SK-N-SH (cell line): ENCODE measurements at regions of chr5 and their contacts with region 1.

Region 1: DNA sequence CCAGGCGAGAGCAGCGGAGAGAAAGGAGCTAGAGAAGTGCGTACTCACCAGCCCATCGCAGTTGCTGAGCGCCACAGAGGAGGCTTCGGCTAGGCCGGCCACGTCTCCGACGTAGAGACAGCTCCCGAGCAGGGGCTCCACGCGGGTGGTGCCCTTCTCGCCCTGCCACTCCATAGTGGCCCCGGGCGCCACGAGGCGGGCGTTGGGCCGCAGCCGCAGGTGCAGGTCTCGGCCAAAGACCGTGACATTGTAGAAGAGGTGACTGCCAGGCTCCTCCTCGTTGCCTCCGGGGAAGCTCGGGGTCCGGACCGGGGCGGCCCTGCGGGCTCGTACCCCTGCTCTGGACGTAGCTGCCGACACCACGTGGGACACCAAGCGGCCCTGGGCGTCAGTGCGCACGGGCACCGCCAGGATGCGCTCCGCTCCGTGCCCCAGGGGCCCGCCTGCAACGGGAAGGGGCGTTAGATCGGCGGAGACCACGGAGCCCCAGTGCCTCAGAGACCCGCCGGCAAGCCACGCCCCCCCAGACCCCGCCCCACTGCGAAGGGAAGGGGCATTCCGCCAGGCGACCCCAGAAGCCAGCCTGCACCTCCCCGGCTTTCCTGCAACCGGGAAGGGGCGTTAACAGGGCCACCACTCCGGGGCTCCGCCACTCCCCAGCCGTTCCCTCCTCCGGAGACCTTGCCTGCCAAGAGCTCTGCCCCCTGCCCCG is 1.4 kb downstream of the ADAMTS2 start:
- DNase-seq: peak; percentile 85
- H3K4me3 ChIP-seq: peak overlapping the region in 1 of 2 experiments; percentile 58; a peak in 2 of 4 replicates
- H3K27ac ChIP-seq: peak overlapping the region in 1 of 2 experiments; percentile 90; a peak in 2 of 4 replicates
- H3K4me1 ChIP-seq: peaks cover 0 to 51% of the 10 kb centered on the region in 2 experiments; a peak in 1 of 4 replicates
- H3K27me3 ChIP-seq: no peaks in the 10 kb centered on the region
- CTCF ChIP-seq: no peak
- EP300 ChIP-seq: no peak
- RAD21 ChIP-seq: peak; percentile 46

Region 2: GRCh38 chr5:179154991-179155955 is 188.6 kb before region 1 on chr5:
- CTCF ChIA-PET with region 1: no interaction called
- POLR2A ChIA-PET with region 1: no interaction called
- DNase-seq: peak; percentile 64
- H3K4me3 ChIP-seq: no peak overlapping the region
- H3K27ac ChIP-seq: no peak overlapping the region
- H3K4me1 ChIP-seq: peaks cover 0 to 8% of the 10 kb centered on the region in 2 experiments; a peak in 1 of 4 replicates
- H3K27me3 ChIP-seq: no peaks in the 10 kb centered on the region
- CTCF ChIP-seq: no peak
- EP300 ChIP-seq: no peak
- RAD21 ChIP-seq: no peak

Region 3: GRCh38 chr5:179228341-179229121 is 115.3 kb before region 1 on chr5:
- CTCF ChIA-PET with region 1: no interaction called
- POLR2A ChIA-PET with region 1: no interaction called
- DNase-seq: peak; percentile 25
- H3K4me3 ChIP-seq: no peak overlapping the region
- H3K27ac ChIP-seq: no peak overlapping the region; a peak in 1 of 4 replicates
- H3K4me1 ChIP-seq: peaks cover 0 to 42% of the 10 kb centered on the region in 2 experiments; a peak in 1 of 4 replicates
- H3K27me3 ChIP-seq: no peaks in the 10 kb centered on the region
- CTCF ChIP-seq: no peak
- EP300 ChIP-seq: no peak
- RAD21 ChIP-seq: no peak

Region 4: DNA sequence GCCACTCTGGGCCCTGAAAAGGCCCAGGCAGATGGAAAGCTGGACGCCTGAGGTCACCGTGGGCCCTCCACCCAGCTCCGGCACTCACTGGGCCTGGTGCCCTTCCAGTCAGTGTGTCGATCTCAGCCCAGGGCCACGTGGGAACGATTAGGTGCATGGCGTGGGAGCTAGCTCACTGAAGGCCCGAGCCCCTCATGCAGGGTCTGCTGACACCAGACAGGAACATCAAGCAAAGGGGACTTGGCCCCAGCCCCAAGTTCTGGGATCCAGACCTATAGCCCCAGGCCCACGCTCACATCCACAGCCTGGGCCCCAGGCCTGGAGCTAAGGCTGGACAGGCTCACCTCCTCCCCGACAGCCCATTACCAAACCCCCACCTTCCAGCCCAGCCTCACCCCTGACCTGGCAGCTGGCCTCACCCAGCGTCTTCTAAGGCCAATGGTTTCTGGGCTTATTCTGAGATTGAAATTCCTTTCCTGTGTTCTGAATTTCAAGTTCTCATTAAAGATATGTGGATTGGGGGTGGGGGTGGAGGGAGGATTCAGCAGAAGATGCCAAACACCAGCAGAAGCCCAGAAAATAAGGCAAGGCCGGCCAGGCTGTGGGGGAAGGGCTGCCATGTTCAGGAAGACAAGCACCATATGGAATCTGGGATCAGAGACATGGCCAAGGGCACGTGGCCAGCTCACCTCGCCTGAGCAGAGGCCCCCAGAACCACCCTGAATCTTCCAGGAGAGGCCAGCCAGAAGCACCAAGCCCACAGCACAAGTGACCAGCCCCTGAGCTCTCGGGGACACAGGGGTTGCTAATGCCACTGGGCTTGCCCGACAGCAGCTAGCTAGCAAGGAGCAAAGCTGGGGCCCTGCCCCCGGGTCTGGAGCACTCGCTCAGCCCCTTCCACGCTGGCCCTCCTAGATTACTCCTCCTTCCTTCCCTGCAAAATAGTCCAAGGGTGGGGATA is 73.0 kb before region 1 on chr5:
- CTCF ChIA-PET with region 1: interaction called, 15 read pairs
- POLR2A ChIA-PET with region 1: no interaction called
- DNase-seq: peak; percentile 74
- H3K4me3 ChIP-seq: no peak overlapping the region
- H3K27ac ChIP-seq: peak overlapping the region in 1 of 2 experiments; percentile 96; a peak in 2 of 4 replicates
- H3K4me1 ChIP-seq: peaks cover 0 to 100% of the 10 kb centered on the region in 2 experiments; a peak in 1 of 4 replicates
- H3K27me3 ChIP-seq: no peaks in the 10 kb centered on the region
- CTCF ChIP-seq: no peak
- EP300 ChIP-seq: peak in 1 of 2 experiments; percentile 71; a peak in 2 of 4 replicates
- RAD21 ChIP-seq: no peak

Region 5: DNA sequence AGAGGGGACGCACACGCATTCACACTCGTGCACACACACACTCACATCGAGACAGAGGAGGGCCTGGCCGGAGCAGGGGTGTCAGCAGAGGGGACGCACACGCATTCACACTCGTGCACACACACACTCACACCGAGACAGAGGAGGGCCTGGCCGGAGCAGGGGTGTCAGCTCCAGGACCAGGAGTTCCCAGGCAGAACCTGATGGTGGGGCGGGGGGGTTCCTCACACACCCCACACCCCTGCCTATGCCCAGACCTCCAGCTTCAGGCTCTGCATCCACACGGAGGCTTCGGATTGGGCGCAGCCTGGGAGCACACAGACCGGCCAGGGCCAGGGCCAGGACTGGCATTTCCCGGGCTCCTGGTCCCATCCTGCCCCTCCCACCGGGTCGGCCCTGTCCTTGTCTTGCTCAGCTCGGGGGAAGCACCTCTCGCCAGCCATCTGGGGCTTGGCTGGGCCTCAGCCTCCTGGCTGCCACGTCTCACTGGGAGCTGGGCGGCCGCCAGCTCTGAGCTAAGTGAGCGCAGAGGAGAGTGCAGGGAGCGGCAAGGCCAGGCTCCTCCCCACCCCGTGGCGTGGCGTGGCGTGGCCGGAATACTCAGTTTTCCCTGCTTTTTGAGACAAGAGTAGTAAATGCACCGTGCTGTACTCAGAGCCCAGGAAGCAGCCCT is 29.9 kb before region 1 on chr5:
- CTCF ChIA-PET with region 1: interaction called, 13 read pairs
- POLR2A ChIA-PET with region 1: no interaction called
- DNase-seq: peak; percentile 92
- H3K4me3 ChIP-seq: no peak overlapping the region
- H3K27ac ChIP-seq: peak overlapping the region in 1 of 2 experiments; percentile 98; a peak in 2 of 4 replicates
- H3K4me1 ChIP-seq: peaks cover 0 to 74% of the 10 kb centered on the region in 2 experiments; a peak in 2 of 4 replicates
- H3K27me3 ChIP-seq: no peaks in the 10 kb centered on the region
- CTCF ChIP-seq: no peak
- EP300 ChIP-seq: no peak; a peak in 1 of 4 replicates
- RAD21 ChIP-seq: no peak

Region 6: GRCh38 chr5:179354305-179354882 is 10.5 kb after region 1 on chr5:
- CTCF ChIA-PET with region 1: interaction called, 27 read pairs
- POLR2A ChIA-PET with region 1: no interaction called
- DNase-seq: peak; percentile 79
- H3K4me3 ChIP-seq: no peak overlapping the region
- H3K27ac ChIP-seq: peak overlapping the region in 1 of 2 experiments; percentile 96; a peak in 2 of 4 replicates
- H3K4me1 ChIP-seq: peaks cover 0 to 48% of the 10 kb centered on the region in 2 experiments; a peak in 1 of 4 replicates
- H3K27me3 ChIP-seq: no peaks in the 10 kb centered on the region
- CTCF ChIP-seq: no peak
- EP300 ChIP-seq: peak in 1 of 2 experiments; percentile 56; a peak in 2 of 4 replicates
- RAD21 ChIP-seq: no peak

Region 7: GRCh38 chr5:179495906-179496455 is 152.1 kb after region 1 on chr5:
- CTCF ChIA-PET with region 1: interaction called, 18 read pairs
- POLR2A ChIA-PET with region 1: no interaction called
- DNase-seq: peak; percentile 48
- H3K4me3 ChIP-seq: no peak overlapping the region
- H3K27ac ChIP-seq: no peak overlapping the region
- H3K4me1 ChIP-seq: peaks cover 0 to 4% of the 10 kb centered on the region in 2 experiments; a peak in 1 of 4 replicates
- H3K27me3 ChIP-seq: no peaks in the 10 kb centered on the region
- CTCF ChIP-seq: no peak
- EP300 ChIP-seq: no peak
- RAD21 ChIP-seq: peak; percentile 48